Naive thymus-derived CD4-positive, alpha-beta T cell (primary cell): ENCODE measurements at regions of chr9 and their contacts with region 1.

Region 1: DNA sequence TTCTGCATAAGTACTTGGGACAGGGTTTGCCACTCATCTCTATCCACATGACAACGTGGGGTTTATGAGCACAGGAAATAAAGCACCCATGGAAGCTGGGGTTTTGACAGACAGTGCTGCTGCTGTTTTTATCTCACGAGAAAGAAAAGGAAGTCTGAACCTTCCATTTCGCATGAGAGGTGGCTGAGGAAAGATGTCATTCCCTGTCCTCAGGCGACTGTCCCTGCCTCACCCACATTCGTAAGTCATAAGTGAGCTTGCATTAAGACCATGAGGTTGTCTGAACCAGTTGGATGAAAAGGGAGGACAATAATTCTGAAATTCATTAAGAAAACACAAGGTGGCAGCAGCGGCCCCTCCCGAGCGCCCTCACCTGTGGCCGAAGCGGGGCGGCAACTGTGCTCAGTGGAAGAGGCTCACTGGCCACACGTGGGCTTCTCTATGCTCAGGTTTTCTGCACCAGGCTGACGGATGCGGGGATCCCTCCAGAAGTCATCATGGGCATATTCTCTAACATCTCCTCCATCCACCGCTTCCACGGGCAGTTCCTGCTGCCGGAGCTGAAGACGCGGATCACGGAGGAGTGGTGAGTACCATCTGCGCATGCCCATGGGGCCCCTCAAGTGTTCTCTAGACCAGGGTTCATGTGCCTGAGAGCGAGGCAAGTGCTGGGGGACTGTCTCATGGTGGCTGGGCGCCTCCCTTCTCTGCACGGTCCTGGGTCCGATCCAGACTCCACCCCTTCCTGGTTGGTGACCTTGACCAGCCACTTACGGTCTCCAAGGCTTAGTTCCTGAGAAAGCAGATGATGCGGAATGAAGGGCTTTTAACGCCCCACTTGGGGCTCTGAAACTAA is 54.7 kb upstream of the SUSD3 start:
- DNase-seq: peak in 8 of 9 donors; percentile 55 to 77 (median 70)
- ATAC-seq: peak; percentile 88
- H3K4me3 ChIP-seq: peak overlapping the region; percentile 21
- H3K4me3 Mint-ChIP-seq: peak overlapping the region in 9 of 10 donors; percentile 54 to 72 (median 69)
- H3K27ac ChIP-seq: peak overlapping the region; percentile 56
- H3K27ac Mint-ChIP-seq: peak overlapping the region; percentile 81 to 98 (median 91)
- H3K4me1 ChIP-seq: peaks cover 47 to 60% of the 10 kb centered on the region in 2 donors
- H3K4me1 Mint-ChIP-seq: peaks cover 38 to 76% (median 67%) of the 10 kb centered on the region in 7 donors
- H3K27me3 ChIP-seq: no peaks in the 10 kb centered on the region
- H3K27me3 Mint-ChIP-seq: no peaks in the 10 kb centered on the region

Region 2: GRCh38 chr9:92808726-92809451 is 194.9 kb before region 1 on chr9:
- CTCF ChIA-PET with region 1: no interaction called
- POLR2A ChIA-PET with region 1: no interaction called
- intact Hi-C with region 1: no loop called
- DNase-seq: peak; percentile 16 to 72 (median 44)
- ATAC-seq: peak; percentile 66
- H3K4me3 ChIP-seq: peak overlapping the region; percentile 57
- H3K4me3 Mint-ChIP-seq: peak overlapping the region; percentile 71 to 89 (median 86)
- H3K27ac ChIP-seq: no peak overlapping the region
- H3K27ac Mint-ChIP-seq: peak overlapping the region in 2 of 9 donors; percentile 36 to 58
- H3K4me1 ChIP-seq: peaks cover 6% of the 10 kb centered on the region in 2 donors
- H3K4me1 Mint-ChIP-seq: peaks cover 7 to 28% (median 10%) of the 10 kb centered on the region in 7 donors
- H3K27me3 ChIP-seq: peaks cover 23 to 36% of the 10 kb centered on the region in 2 donors
- H3K27me3 Mint-ChIP-seq: peaks cover 54 to 64% (median 60%) of the 10 kb centered on the region in 5 donors

Region 3: DNA sequence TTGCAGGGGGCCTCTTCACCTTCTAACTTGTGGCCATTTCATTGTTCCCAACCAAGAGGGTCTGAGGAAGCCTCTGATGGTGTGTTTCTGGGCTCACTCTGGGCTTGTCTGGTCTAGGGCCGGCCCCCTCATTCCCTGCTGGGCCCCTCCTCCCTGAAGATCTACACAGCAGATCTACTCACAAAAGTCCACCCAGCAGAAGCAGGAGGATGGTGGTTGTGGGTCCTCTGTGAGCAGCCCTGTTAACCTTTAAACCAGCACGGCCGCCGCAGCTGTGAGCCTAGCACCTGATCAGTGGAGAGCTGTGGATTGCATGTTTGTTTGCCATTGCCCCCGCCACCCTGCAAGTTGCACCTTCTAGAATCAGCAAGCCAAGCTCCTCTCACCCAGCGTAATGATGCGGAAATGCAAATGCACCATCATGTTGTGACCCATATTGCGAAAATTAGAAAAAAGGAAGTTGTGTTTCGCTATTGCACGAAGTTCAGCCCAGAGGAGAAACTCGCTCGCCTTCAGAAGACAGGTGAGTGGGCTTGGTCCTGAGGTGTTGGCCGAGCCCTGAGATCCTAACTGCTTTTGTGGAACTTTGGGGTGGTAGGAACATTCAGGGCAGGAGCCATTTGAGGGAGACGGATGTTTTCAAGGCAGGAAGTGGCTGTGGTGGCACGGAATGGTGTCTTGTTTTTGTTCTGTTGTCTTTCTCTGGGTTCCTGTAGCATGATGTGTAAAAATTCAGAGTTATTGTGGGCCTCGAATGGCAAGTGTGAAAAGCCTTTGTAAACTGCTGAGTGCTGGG is 39.8 kb before region 1 on chr9:
- CTCF ChIA-PET with region 1: interaction called, 11 read pairs
- POLR2A ChIA-PET with region 1: interaction called, 113 read pairs
- intact Hi-C with region 1: loop called in 1 of 2 experiments (anchors 2 kb)
- DNase-seq: peak; percentile 54 to 94 (median 93)
- ATAC-seq: peak; percentile 84
- H3K4me3 ChIP-seq: peak overlapping the region; percentile 85
- H3K4me3 Mint-ChIP-seq: peak overlapping the region; percentile 86 to 98 (median 93)
- H3K27ac ChIP-seq: peak overlapping the region; percentile 85
- H3K27ac Mint-ChIP-seq: peak overlapping the region; percentile 96 to 99 (median 98)
- H3K4me1 ChIP-seq: peaks cover 60 to 67% of the 10 kb centered on the region in 2 donors
- H3K4me1 Mint-ChIP-seq: peaks cover 40 to 63% (median 56%) of the 10 kb centered on the region in 7 donors
- H3K27me3 ChIP-seq: no peaks in the 10 kb centered on the region
- H3K27me3 Mint-ChIP-seq: no peaks in the 10 kb centered on the region

Region 4: DNA sequence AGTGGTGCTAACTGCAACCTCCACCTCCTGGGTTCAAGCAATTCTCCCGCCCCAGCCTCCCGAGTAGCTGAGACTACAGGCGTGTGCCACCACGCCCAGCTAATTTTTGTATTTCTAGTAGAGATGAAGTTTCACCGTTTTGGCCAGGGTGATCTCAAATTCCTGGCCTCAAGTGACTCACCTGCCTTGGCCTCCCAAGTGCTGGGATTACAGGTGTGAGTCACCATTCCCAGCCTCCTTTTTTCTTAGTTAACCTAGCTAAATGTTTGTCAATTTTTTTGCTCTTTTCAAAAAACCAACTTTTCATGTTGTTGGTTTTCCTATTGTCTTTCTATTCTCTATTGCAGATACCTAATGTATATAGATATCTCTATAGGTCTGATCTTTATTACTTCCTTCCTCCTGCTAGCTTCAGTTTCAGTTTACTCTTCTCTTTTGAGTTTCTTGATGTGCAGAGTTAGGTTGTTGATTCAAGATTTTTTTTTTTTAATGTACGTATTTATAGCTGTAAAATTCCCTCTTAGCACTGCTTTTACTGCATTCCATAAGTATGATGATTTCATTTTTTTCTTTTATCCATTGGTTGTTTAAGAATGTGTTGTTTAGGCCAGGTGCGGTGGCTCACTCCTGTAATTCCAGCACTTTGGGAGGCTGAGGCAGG is 23.6 kb before region 1 on chr9:
- CTCF ChIA-PET with region 1: interaction called, 13 read pairs
- POLR2A ChIA-PET with region 1: interaction called, 20 read pairs
- intact Hi-C with region 1: no loop called
- DNase-seq: no peak
- ATAC-seq: peak; percentile 42
- H3K4me3 ChIP-seq: no peak overlapping the region
- H3K4me3 Mint-ChIP-seq: peak overlapping the region; percentile 56 to 85 (median 72)
- H3K27ac ChIP-seq: peak overlapping the region; percentile 67
- H3K27ac Mint-ChIP-seq: peak overlapping the region; percentile 74 to 94 (median 84)
- H3K4me1 ChIP-seq: peaks cover 54 to 63% of the 10 kb centered on the region in 2 donors
- H3K4me1 Mint-ChIP-seq: peaks cover 56 to 89% (median 76%) of the 10 kb centered on the region in 7 donors
- H3K27me3 ChIP-seq: no peaks in the 10 kb centered on the region
- H3K27me3 Mint-ChIP-seq: no peaks in the 10 kb centered on the region

Region 5: GRCh38 chr9:92992549-92992948 is 11.2 kb before region 1 on chr9:
- CTCF ChIA-PET with region 1: interaction called, 13 read pairs
- POLR2A ChIA-PET with region 1: interaction called, 23 read pairs
- intact Hi-C with region 1: no loop called
- DNase-seq: no peak
- ATAC-seq: no peak
- H3K4me3 ChIP-seq: no peak overlapping the region
- H3K4me3 Mint-ChIP-seq: peak overlapping the region in 8 of 10 donors; percentile 3 to 71 (median 26)
- H3K27ac ChIP-seq: peak overlapping the region; percentile 25
- H3K27ac Mint-ChIP-seq: peak overlapping the region in 8 of 9 donors; percentile 60 to 94 (median 74)
- H3K4me1 ChIP-seq: peaks cover 38 to 46% of the 10 kb centered on the region in 2 donors
- H3K4me1 Mint-ChIP-seq: peaks cover 79 to 100% (median 97%) of the 10 kb centered on the region in 7 donors
- H3K27me3 ChIP-seq: no peaks in the 10 kb centered on the region
- H3K27me3 Mint-ChIP-seq: no peaks in the 10 kb centered on the region

Region 6: GRCh38 chr9:93028448-93029006 is 24.7 kb after region 1 on chr9:
- CTCF ChIA-PET with region 1: interaction called, 7 read pairs
- POLR2A ChIA-PET with region 1: interaction called, 107 read pairs
- intact Hi-C with region 1: loop called in 1 of 2 experiments (anchors 1 kb)
- DNase-seq: peak; percentile 38 to 94 (median 91)
- ATAC-seq: peak; percentile 93
- H3K4me3 ChIP-seq: peak overlapping the region; percentile 49
- H3K4me3 Mint-ChIP-seq: peak overlapping the region; percentile 80 to 91 (median 88)
- H3K27ac ChIP-seq: peak overlapping the region; percentile 90
- H3K27ac Mint-ChIP-seq: peak overlapping the region; percentile 96 to 100 (median 99)
- H3K4me1 ChIP-seq: peaks cover 62 to 93% of the 10 kb centered on the region in 2 donors
- H3K4me1 Mint-ChIP-seq: peaks cover 54 to 93% (median 82%) of the 10 kb centered on the region in 7 donors
- H3K27me3 ChIP-seq: no peaks in the 10 kb centered on the region
- H3K27me3 Mint-ChIP-seq: no peaks in the 10 kb centered on the region

Region 7: DNA sequence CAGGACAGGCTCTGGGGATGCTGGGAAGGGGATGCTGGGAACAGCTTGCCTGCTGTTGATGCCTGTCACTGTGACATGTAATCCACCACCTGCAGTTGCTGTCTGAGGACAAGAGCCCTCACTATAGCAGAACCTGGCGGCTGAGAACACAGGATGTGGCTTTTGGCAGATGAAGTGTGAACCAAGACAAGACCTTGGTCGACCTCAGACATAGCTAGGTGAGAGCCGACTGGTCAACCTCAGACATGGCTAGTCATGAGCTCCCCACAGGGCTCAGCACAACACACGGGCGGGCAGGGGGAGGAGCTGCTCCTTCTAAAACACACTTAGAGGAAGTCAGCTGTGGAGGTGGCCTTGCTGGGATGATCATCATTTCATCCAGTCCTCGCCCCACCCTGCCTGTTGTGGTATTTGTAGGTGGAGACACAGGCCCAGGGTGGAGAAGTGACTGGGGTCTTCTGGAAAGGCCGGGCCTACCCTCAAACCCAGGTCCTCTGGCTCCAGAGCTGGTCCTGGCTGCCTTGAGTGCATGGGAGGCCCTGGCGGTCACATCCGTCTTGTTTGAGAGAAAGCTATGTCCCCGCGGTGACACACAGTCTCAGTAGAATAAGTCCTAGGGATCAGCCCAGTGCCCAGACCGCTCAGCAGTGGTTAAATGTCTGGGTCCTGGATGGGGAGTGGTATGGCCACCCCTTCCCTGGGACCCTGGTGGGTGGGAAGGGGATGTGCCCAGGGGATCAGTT is 60.8 kb after region 1 on chr9:
- CTCF ChIA-PET with region 1: interaction called, 11 read pairs
- POLR2A ChIA-PET with region 1: interaction called, 14 read pairs
- intact Hi-C with region 1: loop called in 1 of 2 experiments (anchors 1 kb)
- DNase-seq: peak; percentile 54 to 95 (median 90)
- ATAC-seq: peak; percentile 96
- H3K4me3 ChIP-seq: peak overlapping the region; percentile 90
- H3K4me3 Mint-ChIP-seq: peak overlapping the region; percentile 87 to 97 (median 92)
- H3K27ac ChIP-seq: peak overlapping the region; percentile 88
- H3K27ac Mint-ChIP-seq: peak overlapping the region; percentile 97 to 100 (median 99)
- H3K4me1 ChIP-seq: peaks cover 63 to 87% of the 10 kb centered on the region in 2 donors
- H3K4me1 Mint-ChIP-seq: peaks cover 71 to 95% (median 86%) of the 10 kb centered on the region in 7 donors
- H3K27me3 ChIP-seq: no peaks in the 10 kb centered on the region
- H3K27me3 Mint-ChIP-seq: no peaks in the 10 kb centered on the region

Region 8: DNA sequence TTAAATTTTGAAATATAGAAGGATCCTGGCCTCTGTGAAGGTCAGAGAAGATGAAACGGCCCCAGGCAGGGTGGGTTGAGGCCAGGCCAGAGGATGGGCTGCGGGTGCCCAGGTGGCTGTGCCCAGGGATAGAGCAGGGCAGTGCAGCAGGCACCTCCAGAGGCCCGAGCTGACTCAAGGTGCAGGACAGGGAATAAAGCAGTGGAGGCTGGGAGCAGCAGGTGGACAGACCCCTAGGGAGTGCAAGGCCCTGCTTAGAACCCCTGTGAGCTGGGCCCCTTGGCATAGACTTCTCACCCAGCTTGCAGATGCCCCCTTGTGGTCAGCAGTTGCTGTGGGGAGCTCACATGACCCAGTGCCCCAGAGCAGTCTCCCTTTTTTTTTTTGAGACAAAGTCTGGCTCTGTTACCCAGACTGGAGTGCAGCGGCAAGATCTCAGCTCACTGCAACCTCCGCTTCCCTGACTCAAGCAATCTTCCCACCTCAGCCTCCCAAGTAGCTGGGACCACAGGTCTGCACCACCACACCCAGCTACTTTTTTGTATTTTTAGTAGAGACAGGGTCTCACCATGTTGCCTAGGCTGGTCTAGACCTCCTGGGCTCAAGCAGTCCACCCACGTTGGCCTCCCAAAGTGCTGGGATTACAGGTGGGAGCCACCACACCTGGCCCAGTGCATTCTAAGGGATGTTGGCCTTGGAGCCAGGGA is 298.9 kb after region 1 on chr9:
- CTCF ChIA-PET with region 1: interaction called, 3 read pairs
- POLR2A ChIA-PET with region 1: no interaction called
- intact Hi-C with region 1: loop called in 1 of 2 experiments (anchors 5 kb)
- DNase-seq: peak in 8 of 9 donors; percentile 39 to 76 (median 66)
- ATAC-seq: peak; percentile 82
- H3K4me3 ChIP-seq: no peak overlapping the region
- H3K4me3 Mint-ChIP-seq: no peak overlapping the region
- H3K27ac ChIP-seq: no peak overlapping the region
- H3K27ac Mint-ChIP-seq: peak overlapping the region in 1 of 9 donors; percentile 36
- H3K4me1 ChIP-seq: no peaks in the 10 kb centered on the region
- H3K4me1 Mint-ChIP-seq: peaks cover 0 to 13% (median 5%) of the 10 kb centered on the region in 7 donors
- H3K27me3 ChIP-seq: no peaks in the 10 kb centered on the region
- H3K27me3 Mint-ChIP-seq: peaks cover 0 to 3% (median 0%) of the 10 kb centered on the region in 5 donors